Left colon (tissue), 2 donors: ENCODE measurements at regions of chr1 and their contacts with region 1.

Region 1: DNA sequence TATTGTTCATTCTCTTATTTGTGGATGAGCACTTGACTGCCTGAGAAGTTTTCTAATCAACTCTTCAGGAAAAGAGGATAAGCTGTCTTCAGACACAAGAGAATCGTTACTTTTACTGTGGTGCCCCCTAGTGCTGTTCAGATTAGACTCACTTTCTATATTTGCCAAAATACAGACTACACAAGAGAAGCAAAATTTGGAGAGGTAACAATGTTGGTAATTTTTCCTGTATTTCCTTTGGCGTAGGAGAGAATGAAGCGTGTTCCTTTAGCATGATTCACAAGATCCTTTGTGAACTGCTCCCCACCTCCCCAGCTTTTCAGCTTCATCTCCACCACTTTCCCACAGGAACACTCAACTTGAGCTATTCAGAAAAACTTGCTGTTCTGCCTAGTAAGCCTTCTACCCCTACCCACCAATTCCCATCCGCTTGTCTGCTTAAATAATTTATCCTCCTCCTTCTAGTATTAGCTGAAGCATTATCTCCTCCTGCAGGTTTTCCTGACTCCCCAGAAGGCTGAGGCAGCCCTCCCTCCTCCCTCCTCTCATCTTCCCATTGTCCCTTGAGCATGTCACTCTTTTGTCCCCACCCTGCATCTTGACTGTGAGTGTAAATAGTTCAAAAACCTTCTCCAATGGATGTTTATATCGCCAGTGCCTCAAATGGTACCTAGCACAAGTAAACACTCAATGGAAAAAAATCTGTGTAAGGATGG is 4.5 kb downstream of the TNFSF4 start:
- DNase-seq: no peak
- ATAC-seq: peak; percentile 71

Region 2: DNA sequence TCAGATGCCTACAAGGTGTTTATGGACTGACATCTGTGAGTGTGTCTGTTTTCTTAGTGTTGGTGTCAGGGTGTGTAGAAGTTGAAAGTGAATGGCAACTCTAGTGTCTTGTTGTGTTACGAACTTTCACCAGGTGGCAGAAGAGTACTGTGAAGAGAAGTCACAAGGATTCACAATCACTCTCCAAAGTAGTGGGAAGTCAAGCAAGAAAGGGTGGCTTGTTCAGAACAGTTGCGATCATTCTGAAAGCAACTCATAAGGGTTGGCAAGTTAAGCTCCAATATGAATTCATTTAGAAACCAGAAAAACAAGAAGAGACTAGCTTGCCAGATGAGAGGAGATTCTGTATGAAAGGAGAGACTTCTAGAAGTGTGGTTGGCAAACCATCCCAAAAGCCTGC is 457.6 kb before region 1 on chr1:
- intact Hi-C with region 1: loop called in 1 of 2 experiments (anchors 5 kb)
- DNase-seq: no peak
- ATAC-seq: peak; percentile 87

Region 3: GRCh38 chr1:172824209-172824608 is 378.4 kb before region 1 on chr1:
- intact Hi-C with region 1: loop called in 1 of 2 experiments (anchors 2 kb)
- DNase-seq: no peak
- ATAC-seq: peak; percentile 28